ENCODE measurements at regions of chr20 and their contacts with region 1.

Region 1: DNA sequence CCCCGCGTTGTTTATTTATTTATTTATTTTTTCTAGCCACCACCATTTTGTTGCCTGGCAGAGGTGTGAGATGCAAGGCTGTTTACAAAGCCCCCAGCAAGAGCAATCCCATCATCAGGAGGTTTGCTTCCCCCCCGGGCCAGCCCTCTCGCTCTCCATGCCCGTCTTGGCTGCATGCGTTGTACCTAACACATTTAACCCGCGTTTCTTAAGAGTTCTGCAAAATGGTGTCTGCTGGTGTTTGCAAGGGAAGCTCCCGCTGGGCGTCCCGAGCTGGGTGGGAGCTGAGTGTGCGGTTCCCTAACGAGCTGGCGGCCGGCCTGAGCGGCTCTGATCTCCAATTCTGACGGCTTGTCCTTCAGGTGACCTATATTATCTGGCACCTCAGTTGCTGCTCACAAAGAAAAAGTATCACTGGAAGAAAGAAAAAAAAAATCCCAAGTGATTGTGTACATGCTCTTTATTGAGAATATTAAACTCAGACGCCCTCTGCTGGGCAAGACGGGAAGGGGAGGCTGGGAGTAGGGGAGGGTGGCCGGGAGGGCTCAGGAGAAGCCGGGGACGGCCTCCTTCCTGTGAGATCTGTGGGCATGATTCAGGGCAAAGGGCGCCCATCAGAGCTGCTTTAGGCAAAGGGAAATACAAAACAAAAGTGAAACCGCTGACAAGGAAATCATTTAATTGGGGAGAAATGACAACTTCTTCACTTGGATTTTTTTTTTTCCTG is 154.8 kb downstream of the BCAS1 start:
- DNase-seq: peak; percentile 98
- H3K4me3 Mint-ChIP-seq: peak overlapping the region; percentile 82
- H3K27ac Mint-ChIP-seq: peak overlapping the region; percentile 88
- H3K4me1 Mint-ChIP-seq: peaks cover 38% of the 10 kb centered on the region
- H3K27me3 Mint-ChIP-seq: no peaks in the 10 kb centered on the region

Region 2: GRCh38 chr20:53695797-53696540 is 219.6 kb before region 1 on chr20:
- CTCF ChIA-PET with region 1: no interaction called
- DNase-seq: no peak
- H3K4me3 Mint-ChIP-seq: no peak overlapping the region
- H3K27ac Mint-ChIP-seq: no peak overlapping the region
- H3K4me1 Mint-ChIP-seq: peaks cover 62% of the 10 kb centered on the region
- H3K27me3 Mint-ChIP-seq: no peaks in the 10 kb centered on the region

Region 3: GRCh38 chr20:53708129-53708968 is 207.3 kb before region 1 on chr20:
- CTCF ChIA-PET with region 1: interaction called, 10 read pairs
- DNase-seq: peak; percentile 55
- H3K4me3 Mint-ChIP-seq: peak overlapping the region; percentile 29
- H3K27ac Mint-ChIP-seq: peak overlapping the region; percentile 95
- H3K4me1 Mint-ChIP-seq: peaks cover 61% of the 10 kb centered on the region
- H3K27me3 Mint-ChIP-seq: no peaks in the 10 kb centered on the region

Region 4: DNA sequence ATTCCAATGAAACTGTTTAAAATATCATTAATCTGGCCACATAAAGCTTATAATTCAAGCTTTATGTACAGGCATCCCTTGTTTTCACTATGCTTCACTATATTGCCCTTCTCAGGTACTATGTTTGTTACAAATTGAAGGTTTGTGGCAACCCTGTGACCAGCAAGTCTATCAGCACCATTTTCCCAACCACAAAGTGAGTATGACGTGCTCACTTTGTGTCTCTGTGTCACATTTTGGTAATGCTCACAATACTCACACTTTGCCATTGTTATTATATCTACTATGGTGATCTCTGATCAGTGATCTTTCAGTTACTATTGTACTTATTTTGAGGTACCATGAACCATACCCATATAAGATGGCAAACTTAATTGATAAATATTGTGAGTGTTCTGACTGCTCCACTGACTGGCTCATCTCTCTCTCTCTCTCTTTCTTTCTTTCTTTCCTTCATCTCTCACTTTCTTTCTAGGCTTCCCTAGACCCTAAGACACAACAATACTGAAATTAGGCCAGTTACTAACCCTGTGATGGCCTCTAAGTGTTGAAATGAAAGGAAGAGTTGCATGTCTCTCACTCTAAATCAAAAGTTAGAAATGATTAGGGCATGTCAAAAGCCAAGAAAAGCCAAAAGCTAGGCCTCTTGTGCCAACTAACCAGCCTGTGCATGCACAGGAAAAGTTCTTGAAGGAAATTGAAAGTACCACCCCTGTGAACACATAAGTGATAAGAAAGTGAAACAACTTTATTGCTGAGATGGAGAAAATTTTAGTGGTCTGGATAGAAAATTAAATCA is 73.1 kb before region 1 on chr20:
- CTCF ChIA-PET with region 1: interaction called, 10 read pairs
- DNase-seq: peak; percentile 40
- H3K4me3 Mint-ChIP-seq: no peak overlapping the region
- H3K27ac Mint-ChIP-seq: peak overlapping the region; percentile 93
- H3K4me1 Mint-ChIP-seq: peaks cover 91% of the 10 kb centered on the region
- H3K27me3 Mint-ChIP-seq: no peaks in the 10 kb centered on the region

Region 5: GRCh38 chr20:53899351-53900167 is 16.1 kb before region 1 on chr20:
- CTCF ChIA-PET with region 1: interaction called, 14 read pairs
- DNase-seq: peak; percentile 88
- H3K4me3 Mint-ChIP-seq: no peak overlapping the region
- H3K27ac Mint-ChIP-seq: peak overlapping the region; percentile 92
- H3K4me1 Mint-ChIP-seq: peaks cover 62% of the 10 kb centered on the region
- H3K27me3 Mint-ChIP-seq: no peaks in the 10 kb centered on the region

Region 6: GRCh38 chr20:53939572-53940359 is 24.2 kb after region 1 on chr20:
- CTCF ChIA-PET with region 1: interaction called, 35 read pairs
- DNase-seq: peak; percentile 86
- H3K4me3 Mint-ChIP-seq: peak overlapping the region; percentile 6
- H3K27ac Mint-ChIP-seq: peak overlapping the region; percentile 9
- H3K4me1 Mint-ChIP-seq: peaks cover 66% of the 10 kb centered on the region
- H3K27me3 Mint-ChIP-seq: no peaks in the 10 kb centered on the region